Naive thymus-derived CD4-positive, alpha-beta T cell (primary cell): ENCODE measurements at regions of chrX and their contacts with region 1.

Region 1: GRCh38 chrX:101206471-101206870 is 13.1 kb upstream of the DRP2 start:
- DNase-seq: peak in 6 of 9 donors; percentile 5 to 35 (median 20)
- ATAC-seq: peak; percentile 62
- H3K4me3 ChIP-seq: no peak overlapping the region
- H3K4me3 Mint-ChIP-seq: no peak overlapping the region
- H3K27ac ChIP-seq: no peak overlapping the region
- H3K27ac Mint-ChIP-seq: no peak overlapping the region
- H3K4me1 ChIP-seq: peaks cover 4 to 6% of the 10 kb centered on the region in 2 donors
- H3K4me1 Mint-ChIP-seq: peaks cover 7 to 30% (median 17%) of the 10 kb centered on the region in 7 donors
- H3K27me3 ChIP-seq: no peaks in the 10 kb centered on the region
- H3K27me3 Mint-ChIP-seq: no peaks in the 10 kb centered on the region

Region 2: GRCh38 chrX:100674705-100675104 is 531.8 kb before region 1 on chrX:
- CTCF ChIA-PET with region 1: no interaction called
- POLR2A ChIA-PET with region 1: no interaction called
- intact Hi-C with region 1: loop called in 1 of 2 experiments (anchors 5 kb)
- DNase-seq: no peak
- ATAC-seq: no peak
- H3K4me3 ChIP-seq: no peak overlapping the region
- H3K4me3 Mint-ChIP-seq: no peak overlapping the region
- H3K27ac ChIP-seq: no peak overlapping the region
- H3K27ac Mint-ChIP-seq: no peak overlapping the region
- H3K4me1 ChIP-seq: no peaks in the 10 kb centered on the region
- H3K4me1 Mint-ChIP-seq: peaks cover 0 to 11% (median 5%) of the 10 kb centered on the region in 7 donors
- H3K27me3 ChIP-seq: no peaks in the 10 kb centered on the region
- H3K27me3 Mint-ChIP-seq: no peaks in the 10 kb centered on the region

Region 3: DNA sequence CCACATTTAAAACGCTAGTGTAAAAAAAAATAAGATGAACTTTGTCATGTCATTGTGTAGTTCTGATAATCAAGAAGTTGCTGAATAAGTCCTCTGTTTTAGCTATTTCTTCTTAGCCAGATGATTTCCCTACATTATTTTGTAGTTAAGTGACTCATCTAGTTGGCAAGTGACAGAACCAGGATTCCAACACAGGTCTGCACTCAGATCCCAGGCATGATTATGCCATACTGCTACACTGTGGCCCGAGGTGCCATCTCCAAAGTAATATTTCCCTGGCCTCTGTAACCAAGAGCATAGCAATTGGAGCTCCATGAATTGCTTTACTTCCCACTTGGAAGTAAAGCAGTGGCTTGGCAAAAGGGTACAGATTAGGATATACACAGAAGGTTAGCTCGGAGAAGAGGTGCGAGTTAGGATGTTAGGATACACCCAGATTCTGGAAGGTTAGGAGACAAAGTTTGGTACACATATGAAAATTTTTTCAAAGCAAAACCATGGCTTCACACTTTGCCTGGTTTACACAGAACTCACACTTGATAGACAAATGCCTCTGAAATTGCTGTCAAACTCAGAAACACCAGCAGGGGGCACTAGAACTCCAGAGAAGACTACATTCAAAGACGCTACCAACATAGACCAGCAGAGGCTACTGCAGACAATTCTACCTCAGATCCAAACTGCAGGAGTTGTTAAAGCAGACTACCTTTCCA is 521.0 kb before region 1 on chrX:
- CTCF ChIA-PET with region 1: no interaction called
- POLR2A ChIA-PET with region 1: no interaction called
- intact Hi-C with region 1: loop called in 1 of 2 experiments (anchors 1 kb)
- DNase-seq: peak in 8 of 9 donors; percentile 34 to 69 (median 60)
- ATAC-seq: peak; percentile 83
- H3K4me3 ChIP-seq: no peak overlapping the region
- H3K4me3 Mint-ChIP-seq: no peak overlapping the region
- H3K27ac ChIP-seq: no peak overlapping the region
- H3K27ac Mint-ChIP-seq: no peak overlapping the region
- H3K4me1 ChIP-seq: no peaks in the 10 kb centered on the region
- H3K4me1 Mint-ChIP-seq: peaks cover 0 to 14% (median 5%) of the 10 kb centered on the region in 7 donors
- H3K27me3 ChIP-seq: no peaks in the 10 kb centered on the region
- H3K27me3 Mint-ChIP-seq: peaks cover 0 to 3% (median 0%) of the 10 kb centered on the region in 5 donors

Region 4: DNA sequence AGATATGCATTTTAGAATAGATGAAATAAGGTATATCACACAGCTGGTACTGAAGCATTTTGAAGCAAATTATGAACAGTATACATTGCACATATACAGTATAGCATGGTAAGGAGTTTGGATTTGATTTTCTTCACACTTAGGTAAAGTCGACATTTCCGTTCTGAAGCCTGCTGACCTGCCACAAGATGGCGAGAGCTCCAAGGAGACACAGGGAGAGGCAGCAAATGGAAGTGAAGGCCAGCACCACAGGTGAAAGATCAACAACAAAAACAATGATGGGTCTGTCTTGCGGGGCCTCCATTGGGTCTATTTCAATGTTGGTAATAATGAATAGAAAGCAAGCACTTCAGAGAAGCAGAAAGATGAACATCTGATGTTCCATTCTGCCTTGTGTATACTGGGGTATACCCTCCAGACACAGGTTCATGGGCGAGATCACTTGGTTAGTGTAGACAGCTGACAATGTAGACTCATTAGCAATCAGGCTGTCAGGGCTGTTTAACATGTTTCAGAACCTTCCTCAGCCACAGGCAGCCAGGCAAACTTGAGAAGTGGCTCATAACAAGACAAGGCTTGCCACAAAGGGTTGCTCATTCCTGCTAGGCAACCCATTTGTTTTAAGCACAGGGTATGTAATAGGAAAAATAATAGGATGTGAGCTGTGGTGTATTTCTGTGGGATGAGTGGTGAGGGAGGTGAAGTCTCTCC is 311.0 kb before region 1 on chrX:
- CTCF ChIA-PET with region 1: interaction called, 4 read pairs
- POLR2A ChIA-PET with region 1: no interaction called
- intact Hi-C with region 1: loop called (anchors 1 kb)
- DNase-seq: peak in 6 of 9 donors; percentile 4 to 47 (median 30)
- ATAC-seq: no peak
- H3K4me3 ChIP-seq: no peak overlapping the region
- H3K4me3 Mint-ChIP-seq: no peak overlapping the region
- H3K27ac ChIP-seq: no peak overlapping the region
- H3K27ac Mint-ChIP-seq: no peak overlapping the region
- H3K4me1 ChIP-seq: no peaks in the 10 kb centered on the region
- H3K4me1 Mint-ChIP-seq: peaks cover 0 to 2% (median 0%) of the 10 kb centered on the region in 7 donors
- H3K27me3 ChIP-seq: no peaks in the 10 kb centered on the region
- H3K27me3 Mint-ChIP-seq: no peaks in the 10 kb centered on the region